Activated B cell treated with CpG ODN at 0.5 μM for 24 hours (primary cell): ENCODE measurements at regions of chr9 and their contacts with region 1.

Region 1: DNA sequence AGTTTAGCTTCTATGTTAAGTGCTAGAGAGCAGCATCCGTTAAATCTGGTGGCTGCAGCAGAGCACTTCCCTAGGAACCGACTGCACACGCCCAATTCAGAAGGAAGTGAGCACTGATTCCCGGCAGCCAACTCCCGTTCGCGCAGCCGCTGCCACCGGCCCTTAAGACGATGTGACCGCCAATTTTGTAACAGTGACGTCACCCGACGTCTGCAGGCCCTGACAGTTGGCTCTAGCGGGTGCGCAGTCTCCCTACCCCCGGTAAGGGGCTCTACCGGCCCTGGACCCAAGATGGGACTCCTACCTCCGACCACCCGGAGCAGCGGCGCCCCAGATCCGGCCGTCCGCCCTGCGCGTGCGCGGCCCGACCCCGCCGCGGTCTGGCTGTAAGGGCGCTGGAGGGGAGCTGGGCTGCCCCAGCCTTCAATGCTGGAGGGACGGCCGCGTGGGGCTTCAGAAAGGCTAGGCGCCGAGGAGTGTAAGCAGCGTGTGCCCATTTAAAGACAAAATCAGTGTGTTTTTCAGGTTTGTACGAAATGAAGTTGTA is 19.1 kb downstream of the DNAJA1 start:
- DNase-seq: peak; percentile 54
- ATAC-seq: peak; percentile 82
- H3K4me3 Mint-ChIP-seq: peak overlapping the region; percentile 83
- H3K27ac Mint-ChIP-seq: peak overlapping the region; percentile 50
- H3K4me1 Mint-ChIP-seq: peaks cover 16% of the 10 kb centered on the region
- H3K27me3 Mint-ChIP-seq: no peaks in the 10 kb centered on the region
- CTCF ChIP-seq: no peak

Region 2: GRCh38 chr9:33017283-33018041 is 26.7 kb before region 1 on chr9:
- CTCF ChIA-PET with region 1: no interaction called
- POLR2A ChIA-PET with region 1: no interaction called
- intact Hi-C with region 1: no loop called
- DNase-seq: no peak
- ATAC-seq: no peak
- H3K4me3 Mint-ChIP-seq: no peak overlapping the region
- H3K27ac Mint-ChIP-seq: no peak overlapping the region
- H3K4me1 Mint-ChIP-seq: peaks cover 5% of the 10 kb centered on the region
- H3K27me3 Mint-ChIP-seq: no peaks in the 10 kb centered on the region
- CTCF ChIP-seq: no peak

Region 3: DNA sequence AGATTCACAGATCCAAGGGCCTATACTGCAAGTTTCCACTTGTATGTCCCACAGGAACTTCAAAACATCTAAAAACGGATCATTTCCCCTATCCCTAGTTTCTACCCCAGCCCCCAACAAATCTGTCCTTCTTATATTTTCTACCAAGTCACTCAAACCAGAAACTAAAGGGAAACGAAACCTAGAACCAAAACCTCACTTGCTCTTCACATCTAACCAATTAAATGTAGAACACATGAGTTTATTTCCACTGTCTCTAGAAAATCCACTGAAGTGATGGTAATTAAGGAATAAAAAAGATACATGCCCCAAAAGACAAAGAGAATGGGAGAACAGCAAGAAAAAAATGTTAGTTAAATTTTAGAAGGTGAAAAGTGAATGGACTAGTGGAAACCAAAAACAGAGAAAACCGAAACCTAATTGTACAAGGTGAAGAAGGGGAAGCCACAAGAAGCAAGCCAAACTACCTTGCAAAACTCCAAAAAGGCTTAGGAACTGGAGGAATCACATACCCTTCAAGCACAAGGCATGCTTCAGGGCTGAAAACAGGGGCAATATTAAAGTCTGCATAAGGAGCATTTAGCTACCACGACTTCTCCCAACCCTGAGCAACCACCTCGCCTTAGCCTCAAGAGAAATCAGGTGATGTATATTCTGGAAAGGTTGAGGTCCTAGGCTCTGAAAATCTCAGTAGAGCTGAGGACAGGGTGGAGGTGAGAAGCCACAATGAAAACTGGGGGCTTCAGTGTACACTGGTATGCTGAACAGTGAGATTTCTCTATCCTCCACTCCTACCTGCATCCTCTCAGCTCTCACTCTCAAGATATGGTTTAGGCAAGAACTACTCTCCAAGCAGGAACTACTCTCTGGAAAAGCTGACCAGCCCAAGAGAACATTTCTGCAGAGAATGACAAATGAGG is 21.2 kb after region 1 on chr9:
- CTCF ChIA-PET with region 1: no interaction called
- POLR2A ChIA-PET with region 1: interaction called, 4 read pairs
- intact Hi-C with region 1: loop called (anchors 2 kb)
- DNase-seq: no peak
- ATAC-seq: peak; percentile 68
- H3K4me3 Mint-ChIP-seq: peak overlapping the region; percentile 52
- H3K27ac Mint-ChIP-seq: peak overlapping the region; percentile 83
- H3K4me1 Mint-ChIP-seq: peaks cover 17% of the 10 kb centered on the region
- H3K27me3 Mint-ChIP-seq: no peaks in the 10 kb centered on the region
- CTCF ChIP-seq: no peak

Region 4: DNA sequence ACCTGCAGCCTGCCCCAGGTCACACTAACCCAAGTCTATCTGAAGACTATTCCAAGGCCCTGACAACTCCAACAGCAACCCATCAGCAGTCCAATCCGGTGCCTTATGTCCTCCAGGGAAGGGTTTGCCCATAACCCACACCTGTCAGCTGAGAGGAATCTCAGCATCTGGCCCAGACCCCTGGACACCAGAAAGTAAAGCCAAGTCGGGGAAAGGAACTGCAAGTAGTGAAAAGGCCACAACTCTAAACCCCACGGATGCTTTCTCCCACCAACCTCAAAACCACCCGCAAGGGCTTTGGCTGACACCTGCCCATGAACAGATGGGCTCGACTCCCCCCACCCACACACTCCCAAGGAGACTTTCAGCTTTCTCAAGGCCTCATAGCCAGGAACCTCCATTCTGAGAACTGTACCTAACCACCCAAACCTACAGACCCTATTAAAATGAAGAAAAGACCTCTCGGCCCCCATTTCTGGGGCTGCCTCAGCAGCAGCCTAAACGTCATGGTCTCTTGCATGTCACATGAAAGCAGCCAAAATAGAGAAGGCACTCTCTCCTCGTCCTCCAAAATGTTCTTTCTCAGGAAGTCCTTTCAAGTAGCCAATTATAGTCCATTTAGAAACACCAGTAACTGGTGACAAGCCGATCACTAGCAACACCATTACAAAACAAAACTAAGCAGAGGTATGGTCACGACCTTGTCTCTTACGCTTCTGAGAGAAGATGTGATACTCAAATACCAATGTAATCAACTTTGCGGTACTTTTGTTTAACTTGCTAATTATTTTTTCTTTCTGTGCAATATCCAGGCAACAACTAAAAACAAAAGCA is 120.0 kb after region 1 on chr9:
- CTCF ChIA-PET with region 1: no interaction called
- POLR2A ChIA-PET with region 1: no interaction called
- intact Hi-C with region 1: no loop called
- DNase-seq: no peak
- ATAC-seq: no peak
- H3K4me3 Mint-ChIP-seq: peak overlapping the region; percentile 97
- H3K27ac Mint-ChIP-seq: peak overlapping the region; percentile 95
- H3K4me1 Mint-ChIP-seq: peaks cover 84% of the 10 kb centered on the region
- H3K27me3 Mint-ChIP-seq: no peaks in the 10 kb centered on the region
- CTCF ChIP-seq: no peak